ENCODE measurements at regions of chr10 and their contacts with region 1.

Region 1: DNA sequence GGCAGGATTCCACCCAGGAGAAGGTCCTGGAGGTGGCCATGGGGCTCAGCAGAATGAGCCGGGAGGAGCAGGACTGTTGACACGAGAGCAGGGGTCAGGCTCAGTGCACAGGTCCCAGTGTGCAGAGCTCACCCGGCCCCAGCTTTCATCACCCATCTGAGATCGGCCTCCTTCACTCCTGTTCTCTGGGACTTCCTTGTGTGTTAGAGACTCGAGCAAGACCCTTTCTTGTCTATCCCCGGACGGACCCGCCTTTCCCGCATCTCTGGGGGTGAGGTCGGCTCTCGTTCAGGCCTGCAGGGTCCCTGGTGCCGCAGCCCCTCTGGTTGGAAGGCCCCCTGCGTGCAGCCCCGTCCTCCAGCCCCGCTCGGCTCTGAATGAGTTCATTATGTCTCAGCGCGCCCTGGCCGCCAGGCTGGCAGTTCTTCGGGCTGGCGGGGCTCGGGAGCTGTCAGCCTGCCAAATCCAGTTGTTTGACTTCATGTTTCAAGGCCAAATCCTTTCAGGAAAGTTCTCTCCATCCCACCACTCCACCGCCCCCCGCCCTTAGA is 127.9 kb downstream of the LHPP start:
- DNase-seq: peak in 8 of 10 donors; percentile 66 to 82 (median 76)
- H3K4me3 ChIP-seq: peak overlapping the region in 48 of 59 donors; percentile 1 to 60 (median 29)
- H3K27ac ChIP-seq: peak overlapping the region in 58 of 59 donors; percentile 29 to 95 (median 86)
- H3K27me3 ChIP-seq: no peaks in the 10 kb centered on the region
- CTCF ChIP-seq: peak in 4 of 56 donors; percentile 3 to 14 (median 6)

Region 2: GRCh38 chr10:124357563-124357890 is 232.0 kb before region 1 on chr10:
- intact Hi-C with region 1: no loop called
- DNase-seq: peak in 1 of 10 donors; percentile 8
- H3K4me3 ChIP-seq: no peak overlapping the region
- H3K27ac ChIP-seq: no peak overlapping the region
- H3K27me3 ChIP-seq: peaks cover 0 to 19% (median 0%) of the 10 kb centered on the region in 45 donors
- CTCF ChIP-seq: no peak

Region 3: GRCh38 chr10:124601431-124602120 is 12.0 kb after region 1 on chr10:
- intact Hi-C with region 1: loop called in 1 of 2 experiments (anchors 2 kb)
- DNase-seq: peak in 1 of 10 donors; percentile 27
- H3K4me3 ChIP-seq: no peak overlapping the region
- H3K27ac ChIP-seq: peak overlapping the region in 6 of 59 donors; percentile 31 to 100 (median 99)
- H3K27me3 ChIP-seq: no peaks in the 10 kb centered on the region
- CTCF ChIP-seq: no peak